Head of caudate nucleus (tissue), 42 donors: ENCODE measurements at regions of chr1 and their contacts with region 1.

Region 1: DNA sequence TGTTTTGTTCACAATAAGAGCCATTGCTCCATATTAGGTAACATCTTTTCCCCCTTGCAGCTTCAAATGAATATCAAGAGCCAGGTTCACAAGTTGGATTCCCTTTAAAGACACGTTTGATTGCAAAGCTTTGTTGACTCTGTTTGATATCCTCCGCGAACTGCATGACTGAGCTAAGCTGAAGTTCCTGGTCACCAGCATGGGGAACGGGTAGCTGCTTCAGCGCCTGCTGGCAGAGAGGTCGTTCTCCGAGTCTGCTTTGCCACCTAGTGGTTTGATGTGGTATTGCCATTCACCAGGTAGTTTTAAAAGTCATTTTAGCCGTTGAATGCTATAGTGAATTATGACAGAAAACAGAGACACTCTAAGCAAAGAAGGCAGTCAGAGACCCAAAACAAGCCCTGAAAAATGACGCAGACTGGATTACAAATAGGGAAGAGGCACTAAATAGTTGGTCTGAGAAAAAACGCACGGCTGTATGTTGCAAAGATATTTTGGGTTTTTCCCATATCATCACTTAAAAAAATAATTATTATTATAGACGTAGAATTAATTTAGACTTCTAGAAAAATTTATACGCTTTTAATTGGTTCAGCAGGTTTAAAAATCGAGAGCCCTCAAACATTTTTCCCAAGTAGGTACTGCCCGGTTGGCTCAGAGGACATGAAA is 193.5 kb upstream of the FMN2 start:
- DNase-seq: peak; percentile 60 to 93 (median 82)

Region 2: DNA sequence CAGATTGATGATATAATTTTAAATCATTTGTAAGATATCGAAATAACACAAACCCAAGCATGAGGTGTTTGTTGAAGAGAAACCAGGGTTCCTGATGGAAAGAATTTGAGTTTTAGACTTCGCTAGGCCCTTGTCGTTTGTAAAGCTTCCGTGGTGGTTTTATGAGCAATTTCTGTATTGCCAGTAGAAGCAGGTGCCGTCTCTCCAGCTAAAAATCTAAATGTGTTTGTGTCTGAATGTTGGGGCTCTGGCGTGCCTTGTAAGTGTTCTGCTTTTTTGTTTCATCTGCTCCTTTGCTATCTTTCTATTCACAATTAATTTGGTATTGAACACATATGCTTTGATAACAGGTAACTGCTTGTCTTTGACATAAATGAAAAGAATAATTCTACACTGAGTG is 484.3 kb before region 1 on chr1:
- intact Hi-C with region 1: loop called (anchors 5 kb)
- DNase-seq: no peak

Region 3: GRCh38 chr1:239976130-239976968 is 78.2 kb after region 1 on chr1:
- intact Hi-C with region 1: no loop called
- DNase-seq: peak in 41 of 42 donors; percentile 25 to 85 (median 62)